ENCODE measurements at regions of chr10 and their contacts with region 1.

Region 1: DNA sequence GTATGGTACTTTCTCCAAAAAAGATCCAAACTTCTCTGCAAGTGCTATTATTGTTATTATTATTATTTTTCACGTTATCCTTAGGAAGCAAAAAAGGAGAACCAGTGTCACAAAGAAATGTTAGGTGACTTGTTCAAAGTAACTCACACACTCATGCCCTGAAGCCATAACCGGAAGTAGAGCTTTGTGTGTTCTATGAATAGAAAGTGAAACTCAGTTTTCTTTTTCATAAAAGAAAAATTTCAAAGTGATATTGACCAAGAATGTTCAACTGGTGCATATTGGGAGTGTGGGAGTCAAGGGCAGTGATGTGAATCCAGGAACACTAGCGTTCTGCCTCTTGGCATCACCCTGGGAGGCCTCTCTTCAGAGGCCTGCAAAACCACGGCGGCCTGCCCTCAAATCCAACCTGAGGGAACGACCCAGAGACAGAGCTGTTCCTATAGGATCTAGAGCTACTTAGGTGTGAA is 106.1 kb downstream of the PRKCQ start:
- DNase-seq: peak; percentile 53
- ATAC-seq: peak; percentile 82
- H3K4me3 Mint-ChIP-seq: peak overlapping the region; percentile 72
- H3K27ac Mint-ChIP-seq: peak overlapping the region; percentile 99
- H3K4me1 Mint-ChIP-seq: peaks cover 59% of the 10 kb centered on the region
- H3K27me3 Mint-ChIP-seq: no peaks in the 10 kb centered on the region

Region 2: DNA sequence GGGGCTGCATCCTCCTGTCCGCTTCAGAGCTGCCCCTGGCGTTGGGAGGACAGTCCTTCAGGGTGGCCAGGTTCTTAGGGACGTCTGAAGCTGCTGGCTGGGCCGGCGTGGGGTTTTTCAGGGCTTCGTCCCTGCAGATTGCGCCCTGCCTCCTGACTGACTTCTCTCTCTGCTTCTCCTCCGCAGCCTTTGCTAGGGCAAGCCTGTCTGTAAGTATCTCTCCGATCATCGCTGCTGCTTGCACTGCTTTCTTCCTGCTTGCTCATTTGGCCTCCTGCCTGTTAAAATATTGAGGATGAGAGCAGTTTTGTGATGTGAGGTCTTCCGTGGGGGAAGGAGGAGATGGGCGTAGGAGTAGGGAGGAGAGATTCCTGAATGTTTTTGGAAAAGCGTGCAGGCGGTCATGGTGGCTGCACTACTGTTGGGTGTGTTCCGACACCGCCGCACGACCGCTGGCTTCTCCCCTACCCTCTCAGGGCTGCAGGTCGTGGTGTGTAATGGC is 245.9 kb before region 1 on chr10:
- CTCF ChIA-PET with region 1: no interaction called
- POLR2A ChIA-PET with region 1: no interaction called
- intact Hi-C with region 1: no loop called
- DNase-seq: no peak
- ATAC-seq: no peak
- H3K4me3 Mint-ChIP-seq: no peak overlapping the region
- H3K27ac Mint-ChIP-seq: no peak overlapping the region
- H3K4me1 Mint-ChIP-seq: no peaks in the 10 kb centered on the region
- H3K27me3 Mint-ChIP-seq: no peaks in the 10 kb centered on the region

Region 3: GRCh38 chr10:6431861-6432260 is 42.1 kb before region 1 on chr10:
- CTCF ChIA-PET with region 1: no interaction called
- POLR2A ChIA-PET with region 1: no interaction called
- intact Hi-C with region 1: no loop called
- DNase-seq: no peak
- ATAC-seq: no peak
- H3K4me3 Mint-ChIP-seq: no peak overlapping the region
- H3K27ac Mint-ChIP-seq: peak overlapping the region; percentile 15
- H3K4me1 Mint-ChIP-seq: no peaks in the 10 kb centered on the region
- H3K27me3 Mint-ChIP-seq: no peaks in the 10 kb centered on the region

Region 4: GRCh38 chr10:6486297-6486696 is 12.4 kb after region 1 on chr10:
- CTCF ChIA-PET with region 1: no interaction called
- POLR2A ChIA-PET with region 1: no interaction called
- intact Hi-C with region 1: no loop called
- DNase-seq: no peak
- ATAC-seq: no peak
- H3K4me3 Mint-ChIP-seq: no peak overlapping the region
- H3K27ac Mint-ChIP-seq: peak overlapping the region; percentile 10
- H3K4me1 Mint-ChIP-seq: peaks cover 56% of the 10 kb centered on the region
- H3K27me3 Mint-ChIP-seq: no peaks in the 10 kb centered on the region

Region 5: DNA sequence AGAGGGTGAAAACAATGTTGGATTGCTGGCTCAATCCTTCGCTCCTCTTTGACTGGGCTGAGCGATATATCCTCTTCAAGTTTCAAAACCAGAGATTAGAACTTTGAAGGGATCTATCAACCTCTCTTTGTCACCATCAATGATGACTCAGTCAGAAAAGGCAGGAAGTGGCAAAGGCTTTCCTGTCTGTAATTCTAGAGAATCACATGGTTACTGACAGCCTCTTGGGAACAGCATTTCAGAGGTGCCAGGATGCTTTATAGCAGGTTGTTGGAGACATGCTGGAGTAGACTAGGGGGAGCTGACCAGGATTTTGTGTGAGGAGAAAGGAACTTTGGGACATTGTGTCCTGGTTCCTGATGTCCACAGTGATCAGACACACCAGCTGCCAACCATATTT is 24.8 kb after region 1 on chr10:
- CTCF ChIA-PET with region 1: interaction called, 3 read pairs
- POLR2A ChIA-PET with region 1: interaction called, 5 read pairs
- intact Hi-C with region 1: loop called (anchors 1 to 2 kb)
- DNase-seq: peak; percentile 47
- ATAC-seq: peak; percentile 79
- H3K4me3 Mint-ChIP-seq: peak overlapping the region; percentile 46
- H3K27ac Mint-ChIP-seq: peak overlapping the region; percentile 89
- H3K4me1 Mint-ChIP-seq: peaks cover 52% of the 10 kb centered on the region
- H3K27me3 Mint-ChIP-seq: no peaks in the 10 kb centered on the region

Region 6: GRCh38 chr10:6514844-6515780 is 41.2 kb after region 1 on chr10:
- CTCF ChIA-PET with region 1: no interaction called
- POLR2A ChIA-PET with region 1: no interaction called
- intact Hi-C with region 1: loop called in 1 of 2 experiments (anchors 5 kb)
- DNase-seq: no peak
- ATAC-seq: no peak
- H3K4me3 Mint-ChIP-seq: no peak overlapping the region
- H3K27ac Mint-ChIP-seq: no peak overlapping the region
- H3K4me1 Mint-ChIP-seq: peaks cover 88% of the 10 kb centered on the region
- H3K27me3 Mint-ChIP-seq: no peaks in the 10 kb centered on the region